H1 (cell line): ENCODE measurements at regions of chr10 and their contacts with region 1.

Region 1: GRCh38 chr10:14536241-14537213 is 205.8 kb upstream of the FRMD4A start:
- DNase-seq: peak; percentile 47 to 91
- H3K4me3 ChIP-seq: no peak overlapping the region
- H3K27ac ChIP-seq: no peak overlapping the region
- H3K4me1 ChIP-seq: peaks cover 0 to 4% (median 1%) of the 10 kb centered on the region in 4 experiments; a peak in 1 of 7 replicates
- H3K27me3 ChIP-seq: no peaks in the 10 kb centered on the region
- CTCF ChIP-seq: peak; percentile 77 to 96 (median 93)
- EP300 ChIP-seq: no peak
- POLR2A ChIP-seq: no peak
- RAD21 ChIP-seq: peak; percentile 93 to 95

Region 2: DNA sequence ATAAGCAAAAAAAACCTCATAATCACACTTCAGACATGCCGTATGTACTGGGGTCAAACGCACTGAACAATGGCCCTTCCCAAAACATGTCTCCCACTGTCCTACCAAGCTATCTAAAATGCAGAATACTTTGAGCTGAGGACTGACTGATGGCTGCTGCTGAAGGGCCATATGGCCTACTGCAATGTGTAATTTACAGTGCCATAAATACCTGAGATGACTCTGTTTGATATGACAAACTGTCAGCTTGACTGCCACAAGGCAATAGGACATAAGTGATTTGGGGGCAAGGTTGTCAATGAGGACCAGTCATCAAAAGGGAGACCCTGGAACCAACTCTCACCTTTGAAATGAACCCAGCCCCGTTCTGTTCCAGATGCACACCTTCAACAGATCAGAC is 18.4 kb before region 1 on chr10:
- CTCF ChIA-PET with region 1: interaction called, 12 read pairs
- POLR2A ChIA-PET with region 1: interaction called, 4 read pairs
- DNase-seq: no peak
- H3K4me3 ChIP-seq: no peak overlapping the region
- H3K27ac ChIP-seq: no peak overlapping the region
- H3K4me1 ChIP-seq: peaks cover 0 to 11% (median 2%) of the 10 kb centered on the region in 4 experiments; a peak in 3 of 7 replicates
- H3K27me3 ChIP-seq: no peaks in the 10 kb centered on the region
- CTCF ChIP-seq: no peak
- EP300 ChIP-seq: no peak
- POLR2A ChIP-seq: no peak
- RAD21 ChIP-seq: no peak

Region 3: GRCh38 chr10:14556285-14556956 is 19.9 kb after region 1 on chr10:
- CTCF ChIA-PET with region 1: interaction called, 156 read pairs
- POLR2A ChIA-PET with region 1: no interaction called
- DNase-seq: no peak
- H3K4me3 ChIP-seq: no peak overlapping the region
- H3K27ac ChIP-seq: no peak overlapping the region
- H3K4me1 ChIP-seq: peaks cover 0 to 18% (median 13%) of the 10 kb centered on the region in 4 experiments; a peak in 6 of 7 replicates
- H3K27me3 ChIP-seq: no peaks in the 10 kb centered on the region
- CTCF ChIP-seq: peak; percentile 48 to 77 (median 75)
- EP300 ChIP-seq: no peak
- POLR2A ChIP-seq: no peak
- RAD21 ChIP-seq: peak; percentile 66 to 70

Region 4: DNA sequence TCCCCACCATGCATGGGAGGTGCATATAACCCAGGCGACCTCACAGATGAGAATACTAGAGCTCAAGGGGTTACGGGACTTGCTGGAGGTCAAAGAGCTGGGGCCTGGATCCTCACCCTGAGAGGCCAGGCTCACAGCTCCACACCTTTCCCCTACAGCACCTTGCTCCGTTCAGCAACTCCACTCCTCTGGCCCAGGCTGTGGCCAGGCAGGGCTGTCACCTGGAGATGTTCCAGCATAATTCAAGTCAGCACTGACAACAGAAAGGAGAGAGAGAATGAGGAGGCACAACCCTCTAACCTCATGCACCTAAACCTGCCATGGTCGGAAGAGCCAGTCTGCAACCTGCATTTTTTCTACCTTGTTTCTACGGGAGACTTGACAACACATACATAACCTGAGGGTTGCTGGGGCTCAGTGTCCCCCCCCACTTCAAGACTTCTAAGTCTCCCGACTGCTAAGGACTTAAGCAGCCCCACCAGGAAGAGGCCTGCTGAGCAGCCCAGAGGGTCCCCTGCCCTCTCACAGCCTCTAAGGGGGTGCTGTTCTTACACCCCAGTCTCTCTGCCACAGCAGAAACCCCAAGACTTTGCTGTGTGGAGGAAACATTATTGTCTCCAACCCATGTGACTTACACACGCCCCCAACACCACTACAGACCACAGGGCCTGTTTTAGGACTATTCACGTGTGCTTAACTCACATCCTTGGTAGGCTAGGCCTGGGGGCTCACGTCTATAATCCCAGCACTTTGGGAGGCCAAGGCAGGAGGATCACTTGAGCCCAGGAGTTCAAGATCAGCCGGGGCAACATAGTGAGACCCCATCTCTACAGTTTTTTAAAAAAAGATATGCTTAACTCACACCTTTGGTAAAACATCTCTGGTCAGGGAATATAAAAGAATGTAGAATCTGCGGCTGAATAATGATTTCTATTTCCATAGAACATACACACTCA is 62.6 kb after region 1 on chr10:
- CTCF ChIA-PET with region 1: interaction called, 10 read pairs
- POLR2A ChIA-PET with region 1: no interaction called
- DNase-seq: no peak
- H3K4me3 ChIP-seq: no peak overlapping the region
- H3K27ac ChIP-seq: no peak overlapping the region
- H3K4me1 ChIP-seq: peaks cover 0 to 2% (median under 1%) of the 10 kb centered on the region in 4 experiments; a peak in 4 of 7 replicates
- H3K27me3 ChIP-seq: no peaks in the 10 kb centered on the region; a peak in 2 of 7 replicates
- CTCF ChIP-seq: no peak
- EP300 ChIP-seq: no peak
- POLR2A ChIP-seq: no peak
- RAD21 ChIP-seq: no peak

Region 5: DNA sequence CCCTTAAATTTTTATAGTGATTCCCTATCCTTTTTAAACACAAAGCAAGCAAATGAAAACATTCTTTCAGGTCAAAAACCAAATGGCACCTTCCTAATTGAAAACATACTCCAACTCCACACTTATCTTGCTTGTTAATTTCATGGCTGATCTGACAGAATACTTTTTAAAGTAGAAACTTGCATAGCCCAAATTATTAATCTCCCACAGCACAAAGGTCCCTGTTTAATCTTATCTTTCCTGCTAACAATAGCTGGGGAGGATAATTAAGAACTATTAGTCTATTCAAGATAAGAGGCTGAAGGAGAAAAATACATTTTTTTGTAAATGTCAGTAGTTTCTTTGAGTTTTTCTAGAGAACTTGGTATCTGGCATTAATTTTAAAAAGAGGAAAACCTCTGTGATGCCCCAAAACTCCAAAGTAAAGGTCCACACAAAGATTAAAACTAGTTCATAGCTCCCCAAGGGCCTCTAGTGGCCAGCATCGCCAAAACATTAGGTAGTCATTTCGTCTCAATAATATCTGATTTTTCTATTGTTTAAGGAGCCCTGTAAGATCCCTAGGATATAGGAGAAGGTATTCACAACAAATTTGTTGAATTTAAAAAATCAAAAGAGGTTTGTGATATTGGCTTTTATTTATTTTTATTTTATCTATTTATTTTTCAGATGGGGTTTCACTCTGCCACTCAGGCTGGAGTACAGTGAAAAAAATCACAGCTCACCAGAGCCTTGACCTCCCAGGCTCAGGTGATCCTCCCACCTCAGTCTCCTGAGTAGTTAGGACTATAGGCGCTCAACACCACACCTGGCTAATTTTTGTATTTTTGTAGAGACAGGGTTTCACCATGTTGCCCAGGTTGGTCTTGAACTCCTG is 286.6 kb after region 1 on chr10:
- CTCF ChIA-PET with region 1: interaction called, 40 read pairs
- POLR2A ChIA-PET with region 1: interaction called, 4 read pairs
- DNase-seq: no peak
- H3K4me3 ChIP-seq: no peak overlapping the region
- H3K27ac ChIP-seq: no peak overlapping the region
- H3K4me1 ChIP-seq: no peaks in the 10 kb centered on the region; a peak in 2 of 7 replicates
- H3K27me3 ChIP-seq: no peaks in the 10 kb centered on the region
- CTCF ChIP-seq: peak in 2 of 3 experiments; percentile 56 to 64; a peak in 3 of 4 replicates
- EP300 ChIP-seq: no peak
- POLR2A ChIP-seq: no peak
- RAD21 ChIP-seq: peak; percentile 86 to 88

Region 6: GRCh38 chr10:14837757-14838581 is 301.4 kb after region 1 on chr10 and contains the starts of genes CDNF, HSPA14 and MSANTD7:
- CTCF ChIA-PET with region 1: interaction called, 19 read pairs
- POLR2A ChIA-PET with region 1: interaction called, 6 read pairs
- DNase-seq: peak; percentile 97 to 98
- H3K4me3 ChIP-seq: peak within 1 kb of the TSS; percentile 87 to 93 (median 91)
- H3K27ac ChIP-seq: peak within 1 kb of the TSS; percentile 91
- H3K4me1 ChIP-seq: peaks cover 0 to 8% (median 3%) of the 10 kb centered on the region in 4 experiments; a peak in 3 of 7 replicates
- H3K27me3 ChIP-seq: no peaks in the 10 kb centered on the region
- CTCF ChIP-seq: no peak
- EP300 ChIP-seq: peak in 1 of 2 experiments; percentile 10; a peak in 1 of 3 replicates
- POLR2A ChIP-seq: peak; percentile 84 to 93
- RAD21 ChIP-seq: no peak
- total RNA-seq, gene CDNF: 0.32 and 0.36 TPM in 2 replicates
- total RNA-seq, gene HSPA14: 32.9 and 36.4 TPM in 2 replicates
- total RNA-seq, gene MSANTD7: 15.2 and 16.0 TPM in 2 replicates